ENCODE measurements at regions of chr4 and their contacts with region 1.

Region 1: GRCh38 chr4:168917138-168917779 is 92.8 kb downstream of the CBR4 start:
- DNase-seq: no peak
- ATAC-seq: no peak
- H3K4me3 ChIP-seq: no peak overlapping the region
- H3K27ac ChIP-seq: no peak overlapping the region
- H3K4me1 ChIP-seq: no peaks in the 10 kb centered on the region
- H3K27me3 ChIP-seq: no peaks in the 10 kb centered on the region

Region 2: GRCh38 chr4:168585168-168586091 is 331.8 kb before region 1 on chr4:
- intact Hi-C with region 1: loop called in 2 of 4 experiments (anchors 10 kb)
- DNase-seq: peak; percentile 85 to 93 (median 87)
- ATAC-seq: peak; percentile 92 to 93
- H3K4me3 ChIP-seq: no peak overlapping the region
- H3K27ac ChIP-seq: no peak overlapping the region
- H3K4me1 ChIP-seq: peaks cover 6% of the 10 kb centered on the region
- H3K27me3 ChIP-seq: no peaks in the 10 kb centered on the region

Region 3: DNA sequence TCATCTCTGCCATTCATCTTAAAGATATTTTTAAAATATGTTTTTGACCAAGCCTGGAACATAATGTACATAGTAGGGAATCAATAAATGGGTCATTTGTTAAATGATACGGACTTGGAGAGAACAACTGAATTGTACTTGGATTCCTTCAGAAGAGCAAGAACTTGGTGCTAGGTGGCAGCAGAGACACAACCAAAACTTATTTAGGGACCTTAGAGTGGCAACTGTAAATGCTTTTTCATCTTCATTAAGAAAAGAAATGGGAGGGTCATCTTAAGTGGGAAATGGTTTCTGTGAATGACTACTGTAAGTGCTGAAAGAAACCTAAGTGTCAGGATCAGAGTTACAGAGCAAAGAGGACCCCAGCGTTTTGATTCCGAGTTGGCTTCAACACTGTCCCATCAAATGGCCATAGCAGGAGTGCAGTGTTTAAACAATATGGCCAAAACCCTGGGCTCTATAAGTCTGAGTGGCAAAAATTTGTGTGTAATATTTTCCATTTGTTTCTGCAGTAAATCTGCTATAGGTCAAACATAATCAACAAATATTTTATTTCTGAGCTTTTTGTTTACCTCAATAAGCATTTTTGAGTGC is 206.8 kb before region 1 on chr4:
- intact Hi-C with region 1: loop called in 3 of 4 experiments (anchors 5 kb)
- DNase-seq: peak in 2 of 3 donors; percentile 30 to 69
- ATAC-seq: peak; percentile 64 to 69
- H3K4me3 ChIP-seq: no peak overlapping the region
- H3K27ac ChIP-seq: no peak overlapping the region
- H3K4me1 ChIP-seq: no peaks in the 10 kb centered on the region
- H3K27me3 ChIP-seq: no peaks in the 10 kb centered on the region

Region 4: GRCh38 chr4:168831919-168832762 is 85.1 kb before region 1 on chr4:
- intact Hi-C with region 1: loop called in 1 of 4 experiments (anchors 10 kb)
- DNase-seq: peak; percentile 83 to 93 (median 91)
- ATAC-seq: peak; percentile 92 to 94
- H3K4me3 ChIP-seq: peak overlapping the region; percentile 68
- H3K27ac ChIP-seq: peak overlapping the region; percentile 87
- H3K4me1 ChIP-seq: peaks cover 2% of the 10 kb centered on the region
- H3K27me3 ChIP-seq: no peaks in the 10 kb centered on the region

Region 5: DNA sequence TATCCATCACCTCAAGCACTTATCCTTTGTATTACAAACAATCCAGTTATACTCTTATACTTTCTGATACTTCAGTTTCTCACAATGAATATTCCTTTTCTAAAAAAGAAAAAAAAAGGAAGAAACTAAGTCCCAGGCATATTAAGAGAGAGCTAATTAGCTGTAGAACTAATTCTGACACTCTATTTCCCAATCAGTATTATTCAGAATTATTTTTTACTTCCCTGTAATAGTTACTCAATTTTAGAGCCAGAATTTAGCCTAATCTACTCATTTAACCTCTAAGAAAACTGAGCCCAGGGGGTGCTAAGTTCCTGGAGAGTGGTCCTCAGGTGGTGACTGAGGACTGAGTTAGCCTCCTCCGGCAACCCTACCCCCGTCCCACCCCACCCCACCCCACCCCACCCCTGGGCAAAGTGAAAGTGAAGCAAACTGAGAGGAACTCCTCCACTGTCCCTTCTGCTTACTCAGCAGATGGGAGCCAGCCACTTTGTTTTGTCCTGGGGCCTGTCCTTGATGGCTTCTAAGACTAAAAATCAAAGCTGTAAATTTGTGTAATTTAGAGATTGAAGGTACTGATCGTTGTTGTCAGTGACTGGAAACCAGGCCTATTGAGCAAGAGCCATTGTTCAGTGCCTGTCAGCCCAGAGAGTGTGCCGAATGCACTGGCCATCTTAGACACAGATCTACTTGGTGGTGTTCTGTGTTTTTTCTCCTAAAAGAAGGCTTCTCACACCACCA is 69.3 kb before region 1 on chr4:
- intact Hi-C with region 1: loop called in 1 of 4 experiments (anchors 10 kb)
- DNase-seq: no peak
- ATAC-seq: peak; percentile 39 to 57
- H3K4me3 ChIP-seq: no peak overlapping the region
- H3K27ac ChIP-seq: peak overlapping the region; percentile 2
- H3K4me1 ChIP-seq: peaks cover 8% of the 10 kb centered on the region
- H3K27me3 ChIP-seq: no peaks in the 10 kb centered on the region